ENCODE measurements at regions of chr19 and their contacts with region 1.

Region 1: DNA sequence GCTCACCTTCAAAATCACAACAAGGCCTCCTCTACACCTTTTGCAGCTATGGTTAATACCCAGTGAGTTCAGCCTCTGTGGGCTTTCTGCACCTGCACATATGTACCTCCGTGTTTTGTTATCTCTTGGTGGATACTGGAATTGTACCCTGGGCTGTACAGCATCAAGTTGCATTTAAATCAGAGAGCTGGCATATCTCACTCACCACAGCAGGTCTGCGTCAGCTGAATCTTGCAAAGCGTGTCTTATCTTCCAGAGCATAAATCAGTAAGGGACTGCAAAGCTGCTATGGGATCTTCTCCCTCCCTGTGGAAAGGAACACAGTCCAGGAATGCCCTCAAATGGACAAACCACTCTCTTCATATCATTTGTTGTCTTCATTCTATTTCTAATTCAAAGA is 1048.7 kb downstream of the UQCRFS1 start:
- DNase-seq: no peak
- CTCF ChIP-seq: no peak

Region 2: DNA sequence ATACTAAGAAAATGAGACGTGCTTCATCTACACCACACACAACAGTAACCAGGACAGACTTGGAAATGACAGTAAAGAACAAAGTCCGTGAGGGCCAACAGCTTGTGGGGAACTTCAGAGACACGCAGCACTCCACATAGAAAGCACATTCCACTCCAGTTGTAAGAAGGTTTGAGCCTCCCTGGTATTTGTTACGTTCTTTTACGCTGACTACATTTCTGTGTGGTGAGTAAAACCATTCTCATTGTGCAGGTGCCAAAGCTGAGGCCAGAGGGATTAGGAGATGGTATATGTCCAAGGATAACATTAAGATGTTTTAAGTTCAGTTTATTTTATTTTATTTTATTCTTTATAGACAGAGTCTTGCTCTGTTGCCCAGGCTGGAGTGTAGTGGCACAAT is 141.2 kb before region 1 on chr19:
- CTCF ChIA-PET with region 1: no interaction called
- POLR2A ChIA-PET with region 1: no interaction called
- DNase-seq: no peak
- CTCF ChIP-seq: no peak

Region 3: DNA sequence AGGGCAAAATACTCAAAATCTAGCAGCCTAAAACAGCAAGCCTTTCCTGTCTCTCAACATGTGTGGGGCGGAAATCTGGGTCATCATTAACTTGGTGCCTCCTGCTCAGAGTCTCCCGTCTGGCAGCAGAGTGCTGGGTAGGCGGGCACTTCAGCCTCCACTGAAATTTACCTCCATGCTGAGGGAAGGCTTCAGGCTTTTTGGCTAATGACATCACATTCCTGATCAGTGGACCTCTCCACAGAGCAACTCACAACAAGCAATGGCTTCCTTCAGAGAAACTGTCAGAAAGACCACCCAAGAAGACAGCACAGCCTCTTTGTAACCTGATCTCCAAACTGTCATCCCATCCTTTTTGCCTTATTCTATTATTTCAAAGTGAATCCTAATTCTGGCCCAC is 60.3 kb before region 1 on chr19:
- CTCF ChIA-PET with region 1: no interaction called
- POLR2A ChIA-PET with region 1: no interaction called
- DNase-seq: no peak
- CTCF ChIP-seq: no peak

Region 4: DNA sequence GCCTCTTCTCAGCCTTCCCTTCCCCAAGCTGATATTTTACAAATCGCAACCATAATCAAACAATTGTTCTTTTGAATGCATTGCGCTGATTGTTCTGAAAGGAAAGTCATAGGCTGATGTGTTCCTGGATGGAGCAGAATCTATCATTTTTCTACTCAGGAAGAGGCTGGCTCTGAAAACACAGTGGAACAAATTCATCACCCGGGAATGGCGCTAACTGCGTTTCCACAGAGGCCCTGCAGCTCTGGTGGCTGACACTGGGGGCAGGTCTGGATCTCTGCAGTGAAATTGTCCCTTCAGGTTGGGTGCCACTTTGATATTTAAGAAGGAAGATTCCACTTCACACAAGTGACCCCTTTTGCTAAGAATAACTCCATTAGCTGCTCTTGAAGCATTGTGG is 12.0 kb before region 1 on chr19:
- CTCF ChIA-PET with region 1: interaction called, 15 read pairs
- POLR2A ChIA-PET with region 1: no interaction called
- DNase-seq: no peak
- CTCF ChIP-seq: no peak

Measured in GM10248 (cell line).